ENCODE measurements at regions of chr6 and their contacts with region 1.

Region 1: GRCh38 chr6:25717866-25718740 is 36.4 kb upstream of the SLC17A4 start:
- DNase-seq: no peak
- H3K4me3 ChIP-seq: no peak overlapping the region
- H3K27ac ChIP-seq: no peak overlapping the region
- H3K4me1 ChIP-seq: no peaks in the 10 kb centered on the region
- H3K27me3 ChIP-seq: peaks cover 0 to 1% (median 0%) of the 10 kb centered on the region in 4 experiments; a peak in 1 of 7 replicates
- CTCF ChIP-seq: peak in 2 of 3 experiments; percentile 22 to 44; a peak in 2 of 4 replicates
- EP300 ChIP-seq: no peak
- POLR2A ChIP-seq: no peak
- RAD21 ChIP-seq: peak; percentile 37 to 41; a peak in 3 of 4 replicates

Region 2: DNA sequence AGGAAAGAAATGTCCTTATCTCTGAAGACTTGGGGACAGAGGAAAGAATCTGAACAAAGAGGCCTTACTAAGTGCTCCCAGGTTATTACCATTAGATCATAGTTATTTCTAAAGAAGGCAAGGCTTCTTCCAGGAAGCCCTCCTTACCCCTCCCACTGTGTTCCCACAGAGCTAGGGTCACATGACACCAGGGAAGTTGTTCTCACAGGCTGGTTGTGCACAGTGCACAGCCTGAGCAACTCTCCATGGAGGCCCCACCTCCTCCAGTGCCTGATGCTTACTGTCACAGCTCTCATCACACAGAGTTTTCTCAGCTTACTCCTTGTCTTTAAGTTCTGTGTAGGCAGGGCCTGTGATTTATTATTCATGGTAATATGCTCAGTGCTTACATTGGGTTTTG is 135.0 kb before region 1 on chr6:
- CTCF ChIA-PET with region 1: no interaction called
- POLR2A ChIA-PET with region 1: no interaction called
- DNase-seq: no peak
- H3K4me3 ChIP-seq: no peak overlapping the region
- H3K27ac ChIP-seq: no peak overlapping the region
- H3K4me1 ChIP-seq: no peaks in the 10 kb centered on the region
- H3K27me3 ChIP-seq: no peaks in the 10 kb centered on the region
- CTCF ChIP-seq: no peak
- EP300 ChIP-seq: no peak
- POLR2A ChIP-seq: no peak
- RAD21 ChIP-seq: no peak

Region 3: GRCh38 chr6:25706314-25707014 is 11.6 kb before region 1 on chr6:
- CTCF ChIA-PET with region 1: interaction called, 52 read pairs
- POLR2A ChIA-PET with region 1: no interaction called
- DNase-seq: no peak
- H3K4me3 ChIP-seq: no peak overlapping the region
- H3K27ac ChIP-seq: no peak overlapping the region
- H3K4me1 ChIP-seq: no peaks in the 10 kb centered on the region
- H3K27me3 ChIP-seq: no peaks in the 10 kb centered on the region
- CTCF ChIP-seq: no peak
- EP300 ChIP-seq: no peak
- POLR2A ChIP-seq: no peak
- RAD21 ChIP-seq: no peak

Region 4: DNA sequence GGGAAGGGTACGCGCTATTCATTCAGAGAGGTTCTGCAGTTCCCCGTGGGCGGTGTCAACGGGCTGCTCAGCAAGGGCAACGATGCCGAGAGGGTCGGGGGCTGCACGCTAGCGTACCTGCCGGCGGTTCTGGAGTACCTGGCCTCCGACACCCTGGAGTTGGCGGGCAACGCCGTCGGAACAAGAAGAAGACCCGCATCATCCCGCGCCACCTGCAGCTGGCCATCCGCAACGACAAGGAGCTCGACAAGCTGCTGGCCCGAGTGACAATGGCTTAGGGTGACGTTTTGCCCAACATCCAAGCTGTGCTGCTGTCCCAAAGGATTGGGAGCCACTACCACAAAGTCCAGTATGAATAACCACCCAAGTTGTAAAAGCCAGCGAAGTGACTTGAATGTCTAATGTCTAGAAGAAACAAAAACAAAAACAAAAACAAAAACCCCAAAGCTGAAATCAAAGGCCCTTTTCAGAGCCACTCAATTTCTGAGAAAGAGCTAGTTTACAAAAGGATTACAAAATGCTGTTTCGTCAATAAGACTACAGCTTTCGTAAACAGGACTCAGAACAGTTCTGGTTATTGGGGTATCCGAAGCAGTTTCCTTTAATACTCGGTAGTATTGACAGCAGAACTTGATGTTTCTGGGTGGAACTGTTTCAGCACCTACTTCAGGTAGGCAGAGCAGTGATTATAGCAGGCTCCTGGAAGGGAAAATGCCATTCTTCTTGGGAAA is 14.5 kb after region 1 on chr6:
- CTCF ChIA-PET with region 1: interaction called, 36 read pairs
- POLR2A ChIA-PET with region 1: no interaction called
- DNase-seq: no peak
- H3K4me3 ChIP-seq: no peak overlapping the region; a peak in 1 of 8 replicates
- H3K27ac ChIP-seq: no peak overlapping the region
- H3K4me1 ChIP-seq: no peaks in the 10 kb centered on the region
- H3K27me3 ChIP-seq: no peaks in the 10 kb centered on the region
- CTCF ChIP-seq: peak; percentile 32 to 38 (median 36); a peak in 3 of 4 replicates
- EP300 ChIP-seq: no peak
- POLR2A ChIP-seq: no peak
- RAD21 ChIP-seq: peak; percentile 21 to 28; a peak in 2 of 4 replicates

Region 5: DNA sequence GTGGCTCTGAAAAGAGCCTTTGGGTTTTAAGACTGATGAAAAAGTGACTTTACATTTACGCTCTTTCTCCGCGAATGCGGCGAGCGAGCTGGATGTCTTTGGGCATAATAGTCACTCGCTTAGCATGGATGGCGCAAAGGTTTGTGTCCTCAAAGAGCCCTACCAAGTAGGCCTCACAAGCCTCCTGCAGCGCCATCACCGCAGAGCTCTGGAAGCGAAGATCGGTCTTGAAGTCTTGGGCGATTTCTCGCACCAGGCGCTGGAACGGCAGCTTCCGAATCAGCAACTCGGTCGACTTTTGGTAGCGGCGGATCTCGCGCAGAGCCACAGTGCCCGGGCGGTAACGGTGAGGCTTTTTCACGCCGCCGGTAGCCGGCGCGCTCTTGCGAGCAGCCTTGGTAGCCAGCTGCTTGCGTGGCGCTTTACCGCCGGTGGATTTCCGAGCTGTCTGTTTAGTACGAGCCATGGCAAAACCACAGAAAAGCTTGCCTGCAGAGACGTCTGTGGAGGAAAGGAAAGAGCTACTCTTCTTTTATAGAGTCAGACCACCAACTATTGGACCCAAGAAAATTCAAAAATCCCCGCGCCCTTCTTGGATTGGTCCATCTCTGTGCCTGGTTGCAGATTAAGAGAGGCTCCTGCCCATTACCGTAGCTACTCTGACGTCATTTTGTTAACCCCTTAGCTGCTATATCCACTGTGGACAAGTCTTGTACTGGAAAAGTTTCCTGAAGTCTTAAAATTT is 313.7 kb after region 1 on chr6:
- CTCF ChIA-PET with region 1: no interaction called
- POLR2A ChIA-PET with region 1: no interaction called
- DNase-seq: peak; percentile 82 to 88
- H3K4me3 ChIP-seq: peak overlapping the region; percentile 81 to 95 (median 92)
- H3K27ac ChIP-seq: peak overlapping the region; percentile 96
- H3K4me1 ChIP-seq: peaks cover 2 to 18% (median 13%) of the 10 kb centered on the region in 4 experiments; a peak in 5 of 7 replicates
- H3K27me3 ChIP-seq: no peaks in the 10 kb centered on the region
- CTCF ChIP-seq: no peak
- EP300 ChIP-seq: peak in 1 of 2 experiments; percentile 2; a peak in 1 of 3 replicates
- POLR2A ChIP-seq: peak; percentile 99 to 100
- RAD21 ChIP-seq: no peak